ENCODE measurements at regions of chr12 and their contacts with region 1.

Region 1: GRCh38 chr12:48454667-48455066 is 17.7 kb upstream of the ANP32D start:
- DNase-seq: no peak
- ATAC-seq: peak in 1 of 8 donors; percentile 44
- H3K4me3 ChIP-seq: no peak overlapping the region
- H3K27ac ChIP-seq: no peak overlapping the region
- H3K4me1 ChIP-seq: no peaks in the 10 kb centered on the region
- H3K27me3 ChIP-seq: no peaks in the 10 kb centered on the region
- CTCF ChIP-seq: peak; percentile 23 to 71 (median 58)

Region 2: DNA sequence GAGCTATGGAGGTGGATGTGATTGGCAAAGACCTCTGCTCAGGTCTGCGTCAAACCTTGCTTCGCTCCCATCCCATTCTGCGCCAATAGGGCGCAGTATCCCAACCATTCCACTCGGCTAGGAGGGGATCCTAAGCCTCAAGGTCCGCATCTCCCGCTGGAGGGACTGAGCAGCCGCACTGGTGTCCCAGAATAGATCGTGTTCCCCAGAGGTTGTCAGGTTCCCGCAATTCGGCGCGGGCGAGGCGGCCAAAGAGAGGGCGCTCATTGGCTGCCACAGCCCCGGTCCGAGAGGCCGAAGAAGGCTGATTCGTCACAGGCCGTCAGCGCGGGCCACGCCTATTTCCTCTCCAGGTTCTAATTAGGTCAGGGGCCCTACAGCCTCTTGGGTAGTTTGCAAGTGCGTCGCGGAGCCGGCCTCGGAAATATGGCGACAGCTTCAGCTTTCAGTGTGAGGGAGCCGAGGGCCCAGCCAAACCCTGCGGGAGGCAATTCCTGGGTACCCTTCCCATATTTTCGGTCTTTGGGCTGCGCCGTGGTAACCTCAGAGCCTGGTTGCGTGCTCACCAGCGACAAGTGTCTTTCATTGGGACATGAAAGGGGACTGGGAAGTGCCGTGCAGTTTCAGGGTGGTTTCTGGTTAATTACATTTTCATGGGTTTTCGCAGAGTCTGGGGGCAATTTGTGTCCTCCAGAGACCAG is 256.5 kb before region 1 on chr12:
- intact Hi-C with region 1: loop called in 1 of 10 experiments (anchors 5 kb)
- DNase-seq: peak; percentile 97 to 98
- ATAC-seq: peak; percentile 98 to 100 (median 100)
- H3K4me3 ChIP-seq: peak overlapping the region; percentile 38 to 97 (median 75)
- H3K27ac ChIP-seq: peak overlapping the region; percentile 89 to 100 (median 100)
- H3K4me1 ChIP-seq: peaks cover 0 to 36% (median 23%) of the 10 kb centered on the region in 9 donors
- H3K27me3 ChIP-seq: peaks cover 0 to 3% (median 0%) of the 10 kb centered on the region in 7 donors
- CTCF ChIP-seq: no peak

Region 3: DNA sequence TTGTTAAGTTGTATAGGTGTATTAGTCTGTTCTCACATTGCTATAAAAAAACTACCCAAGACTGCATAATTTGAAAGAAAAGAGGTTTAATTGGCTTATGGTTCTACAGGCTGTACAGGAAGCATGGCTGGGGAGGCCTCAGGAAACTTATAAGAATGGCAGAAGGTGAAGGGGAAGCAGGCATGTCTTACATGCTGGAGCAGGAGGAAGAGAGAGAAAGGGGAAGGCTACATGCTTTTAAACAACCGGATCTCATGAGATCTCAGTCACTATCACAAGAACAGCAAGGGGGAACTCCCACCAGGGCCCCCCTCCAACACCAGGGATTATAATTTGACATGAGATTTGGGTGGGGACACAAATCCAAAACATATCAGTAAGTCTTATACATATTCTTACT is 191.1 kb before region 1 on chr12:
- intact Hi-C with region 1: loop called in 2 of 10 experiments (anchors 10 kb)
- DNase-seq: no peak
- ATAC-seq: no peak
- H3K4me3 ChIP-seq: no peak overlapping the region
- H3K27ac ChIP-seq: no peak overlapping the region
- H3K4me1 ChIP-seq: no peaks in the 10 kb centered on the region
- H3K27me3 ChIP-seq: peaks cover 0 to 5% (median 0%) of the 10 kb centered on the region in 7 donors
- CTCF ChIP-seq: no peak

Region 4: DNA sequence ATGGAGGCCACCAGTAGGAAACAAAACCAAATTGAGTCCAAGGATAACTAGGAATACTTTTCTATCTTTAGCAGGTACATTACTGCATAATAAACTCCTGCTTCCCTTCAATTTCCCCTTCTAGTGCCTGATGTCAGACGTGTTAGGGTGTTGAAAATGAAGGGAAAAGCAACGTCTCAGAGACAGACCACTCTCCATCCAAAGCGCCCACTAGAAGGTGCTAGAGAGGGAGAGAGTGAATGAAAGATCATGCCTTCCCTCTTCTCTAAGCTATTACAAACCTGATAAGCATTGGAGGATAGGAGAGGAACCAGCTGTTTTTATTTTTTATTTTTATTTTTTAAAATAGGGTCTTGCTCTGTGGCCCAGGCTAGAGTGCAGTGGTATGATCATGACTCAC is 168.0 kb before region 1 on chr12:
- intact Hi-C with region 1: loop called in 1 of 10 experiments (anchors 5 kb)
- DNase-seq: peak in 1 of 2 donors; percentile 6
- ATAC-seq: no peak
- H3K4me3 ChIP-seq: no peak overlapping the region
- H3K27ac ChIP-seq: no peak overlapping the region
- H3K4me1 ChIP-seq: peaks cover 0 to 27% (median 0%) of the 10 kb centered on the region in 9 donors
- H3K27me3 ChIP-seq: peaks cover 0 to 20% (median 3%) of the 10 kb centered on the region in 7 donors
- CTCF ChIP-seq: peak in 7 of 9 donors; percentile 33 to 59 (median 47)